ENCODE measurements at regions of chr2 and their contacts with region 1.

Region 1: DNA sequence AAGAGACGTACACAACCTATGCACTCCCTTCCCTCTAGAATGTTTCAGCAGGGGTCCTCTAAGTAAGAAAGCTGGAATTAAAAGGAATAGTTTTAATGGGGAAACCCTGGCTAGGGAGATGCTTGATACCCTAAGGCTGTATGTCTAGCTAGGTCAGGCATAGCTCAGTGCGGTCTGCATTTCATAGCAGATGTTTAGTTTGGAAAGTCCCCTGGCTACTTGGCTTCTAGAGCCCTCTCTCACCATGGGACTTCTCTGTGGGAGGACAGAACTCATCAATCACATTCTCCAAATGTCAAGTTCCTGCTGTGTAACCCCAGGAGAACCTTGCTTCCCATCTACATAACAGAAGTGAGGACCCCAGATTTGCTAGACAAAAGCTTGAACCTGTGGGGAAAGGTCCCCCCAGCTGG is 24.1 kb upstream of the ANXA4 start:
- DNase-seq: no peak
- ATAC-seq: no peak
- H3K4me3 ChIP-seq: no peak overlapping the region
- H3K4me1 ChIP-seq: no peaks in the 10 kb centered on the region
- CTCF ChIP-seq: no peak

Region 2: GRCh38 chr2:69559442-69560146 is 158.3 kb before region 1 on chr2:
- intact Hi-C with region 1: loop called (anchors 2 to 10 kb)
- DNase-seq: peak in 1 of 3 donors; percentile 50
- ATAC-seq: peak; percentile 95
- H3K4me3 ChIP-seq: peak overlapping the region; percentile 1
- H3K4me1 ChIP-seq: peaks cover 26% of the 10 kb centered on the region
- CTCF ChIP-seq: peak; percentile 45

Region 3: GRCh38 chr2:69565431-69565839 is 152.4 kb before region 1 on chr2:
- intact Hi-C with region 1: loop called in 1 of 2 experiments (anchors 10 kb)
- DNase-seq: peak; percentile 55 to 75 (median 70)
- ATAC-seq: peak; percentile 75
- H3K4me3 ChIP-seq: no peak overlapping the region
- H3K4me1 ChIP-seq: peaks cover 27% of the 10 kb centered on the region
- CTCF ChIP-seq: peak; percentile 70

Region 4: DNA sequence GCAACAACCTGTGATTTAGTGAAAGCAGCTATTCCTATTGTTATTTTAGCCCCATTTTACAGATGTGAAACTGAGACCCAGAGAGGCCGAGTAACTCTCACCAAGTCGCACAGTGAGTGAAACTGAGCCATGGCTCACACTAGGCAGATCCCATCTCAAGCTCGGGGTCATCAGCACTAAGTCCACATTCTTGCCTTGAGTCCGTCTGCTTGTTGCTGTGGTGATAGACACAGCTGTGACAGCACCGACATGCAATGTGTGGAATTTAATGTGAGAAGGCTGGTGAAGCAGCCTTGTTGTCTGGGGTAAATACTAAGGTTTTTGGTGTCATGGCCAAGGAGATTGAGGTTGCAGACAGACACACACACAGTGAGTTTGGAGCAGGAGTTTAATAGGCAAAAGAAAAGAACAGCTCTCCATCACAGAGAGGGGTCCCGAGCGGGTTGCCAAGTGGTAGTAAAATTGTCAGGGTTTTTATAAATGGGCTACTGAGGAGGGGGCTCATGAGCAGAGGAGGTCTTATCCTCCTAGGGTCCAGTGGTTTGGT is 71.4 kb after region 1 on chr2:
- intact Hi-C with region 1: no loop called
- DNase-seq: no peak
- ATAC-seq: no peak
- H3K4me3 ChIP-seq: no peak overlapping the region
- H3K4me1 ChIP-seq: no peaks in the 10 kb centered on the region
- CTCF ChIP-seq: no peak